ENCODE measurements at regions of chr4 and their contacts with region 1.

Region 1: DNA sequence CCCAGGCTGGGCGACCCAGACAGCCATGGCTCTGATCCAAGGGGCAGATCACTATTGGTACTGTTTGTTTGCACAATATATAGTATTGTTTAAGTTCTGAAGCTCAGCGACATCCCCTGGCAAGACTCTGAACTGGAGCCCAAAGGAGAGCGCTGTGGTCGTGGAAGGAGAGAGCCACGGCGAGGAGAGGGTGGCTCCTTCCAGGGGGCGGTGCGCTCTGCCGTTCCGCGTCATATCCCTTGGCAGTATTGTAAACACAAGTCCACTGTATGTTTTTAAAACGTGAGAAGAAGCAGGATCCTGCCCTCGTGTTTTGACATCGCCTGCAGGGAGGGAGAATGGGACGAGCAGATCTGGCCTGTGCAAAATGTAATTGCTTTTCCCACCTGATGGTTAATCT is 185.5 kb downstream of the RAB28 start:
- DNase-seq: peak; percentile 95
- H3K4me3 ChIP-seq: peak overlapping the region in 3 of 4 donors; percentile 30 to 40 (median 38)
- H3K27ac ChIP-seq: peak overlapping the region in 3 of 4 donors; percentile 84 to 87 (median 84)
- H3K4me1 ChIP-seq: peaks cover 0 to 40% (median 26%) of the 10 kb centered on the region in 4 donors
- H3K27me3 ChIP-seq: no peaks in the 10 kb centered on the region
- CTCF ChIP-seq: peak in 1 of 4 experiments; percentile 29
- EP300 ChIP-seq: peak; percentile 84 to 95 (median 86)
- POLR2A ChIP-seq: no peak

Region 2: GRCh38 chr4:12979797-12980196 is 318.9 kb before region 1 on chr4:
- intact Hi-C with region 1: loop called (anchors 5 kb)
- DNase-seq: peak; percentile 81
- H3K4me3 ChIP-seq: no peak overlapping the region
- H3K27ac ChIP-seq: peak overlapping the region in 3 of 4 donors; percentile 63 to 65 (median 65)
- H3K4me1 ChIP-seq: peaks cover 0 to 20% (median 12%) of the 10 kb centered on the region in 4 donors
- H3K27me3 ChIP-seq: no peaks in the 10 kb centered on the region
- CTCF ChIP-seq: no peak
- EP300 ChIP-seq: peak in 1 of 4 donors; percentile 51
- POLR2A ChIP-seq: no peak

Region 3: DNA sequence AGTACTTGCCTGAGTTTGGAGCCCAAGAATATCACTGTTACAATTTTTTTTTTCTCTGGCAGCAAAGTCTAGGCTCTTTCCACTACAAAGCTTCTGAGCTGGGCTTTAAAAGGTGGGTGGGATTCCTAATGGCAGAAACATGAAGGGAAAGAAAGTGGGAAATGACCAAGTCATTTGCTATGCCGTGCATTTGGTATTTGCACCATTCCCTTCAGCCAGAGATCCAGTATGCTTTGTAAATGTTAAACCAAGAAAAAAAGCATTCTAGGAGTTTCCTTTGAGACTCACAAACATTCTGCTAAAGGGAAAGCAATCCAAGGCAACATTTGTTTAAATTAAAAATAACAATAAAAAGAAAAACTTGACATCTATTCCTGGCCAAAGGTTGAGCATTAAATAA is 265.7 kb before region 1 on chr4:
- intact Hi-C with region 1: no loop called
- DNase-seq: no peak
- H3K4me3 ChIP-seq: no peak overlapping the region
- H3K27ac ChIP-seq: no peak overlapping the region
- H3K4me1 ChIP-seq: no peaks in the 10 kb centered on the region
- H3K27me3 ChIP-seq: no peaks in the 10 kb centered on the region
- CTCF ChIP-seq: no peak
- EP300 ChIP-seq: no peak
- POLR2A ChIP-seq: no peak

Region 4: GRCh38 chr4:13143222-13144070 is 155.2 kb before region 1 on chr4:
- intact Hi-C with region 1: loop called (anchors 10 kb)
- DNase-seq: no peak
- H3K4me3 ChIP-seq: peak overlapping the region in 1 of 4 donors; percentile 8
- H3K27ac ChIP-seq: peak overlapping the region in 2 of 4 donors; percentile 5 to 23
- H3K4me1 ChIP-seq: peaks cover 0 to 14% (median 11%) of the 10 kb centered on the region in 4 donors
- H3K27me3 ChIP-seq: no peaks in the 10 kb centered on the region
- CTCF ChIP-seq: no peak
- EP300 ChIP-seq: no peak
- POLR2A ChIP-seq: no peak

Region 5: DNA sequence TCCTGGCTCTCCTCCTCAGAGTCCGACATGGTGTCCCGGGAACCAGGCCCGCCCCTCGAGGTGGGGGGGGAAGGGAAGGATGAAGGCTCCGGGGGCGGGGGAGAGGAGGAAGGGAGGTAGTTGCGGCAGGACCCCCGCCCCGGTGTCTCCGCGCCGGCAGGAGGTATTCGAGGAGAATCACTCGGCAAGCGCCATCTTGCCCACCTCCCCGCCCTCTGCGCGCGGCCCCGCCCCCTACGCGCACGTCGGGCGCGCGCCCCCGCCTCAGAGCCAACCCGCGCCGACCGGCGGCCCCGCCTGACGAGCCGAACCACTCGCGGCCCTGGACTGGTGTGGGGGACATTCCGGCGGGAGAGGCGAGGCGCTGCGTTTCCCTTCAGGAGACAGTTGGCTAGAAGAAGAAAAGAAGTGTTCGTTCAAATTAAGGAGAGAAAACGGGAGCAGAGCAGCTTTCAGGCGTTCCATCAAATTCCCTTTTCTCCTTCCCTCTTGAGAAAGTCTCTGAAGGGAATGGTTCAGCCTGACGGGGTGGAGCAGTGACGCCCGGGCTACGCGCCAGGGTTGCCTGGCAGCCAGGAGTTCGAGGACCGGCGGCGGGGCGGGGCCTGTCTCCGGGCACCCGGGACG is 185.6 kb after region 1 on chr4 and contains the start of gene RAB28:
- intact Hi-C with region 1: loop called (anchors 2 kb)
- DNase-seq: peak; percentile 98
- H3K4me3 ChIP-seq: peak within 1 kb of the TSS; percentile 80 to 92 (median 90)
- H3K27ac ChIP-seq: peak within 1 kb of the TSS; percentile 95 to 97 (median 96)
- H3K4me1 ChIP-seq: peaks cover 0 to 33% (median 17%) of the 10 kb centered on the region in 4 donors
- H3K27me3 ChIP-seq: no peaks in the 10 kb centered on the region
- CTCF ChIP-seq: no peak
- EP300 ChIP-seq: no peak
- POLR2A ChIP-seq: peak; percentile 45 to 68
- total RNA-seq, gene RAB28: 24.1 to 32.1 (median 28.7) TPM

Measured in sigmoid colon (tissue), 7 donors.